ENCODE measurements at regions of chr12 and their contacts with region 1.

Region 1: DNA sequence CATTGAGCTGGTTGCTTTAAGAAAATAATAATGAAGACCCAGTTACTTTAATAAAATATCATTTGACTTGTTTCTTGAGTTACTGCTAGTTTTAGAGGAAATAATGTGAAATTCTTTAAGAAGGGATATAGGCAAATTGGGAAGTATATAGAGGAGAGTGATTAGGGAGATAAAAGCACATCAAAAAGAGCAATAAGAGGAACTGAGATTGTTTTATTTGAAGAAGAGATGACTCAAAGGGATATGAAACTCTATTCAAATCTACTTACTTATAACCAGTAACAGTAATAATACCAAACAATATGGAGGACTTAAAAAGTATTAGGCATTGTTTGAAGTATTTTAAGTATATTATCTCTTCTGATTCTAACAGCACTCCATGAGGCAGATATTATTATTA is 37.1 kb downstream of the LRRK2 start:
- DNase-seq: peak; percentile 75
- H3K4me3 ChIP-seq: peak overlapping the region; percentile 39
- H3K27ac ChIP-seq: peak overlapping the region; percentile 92
- H3K4me1 ChIP-seq: peaks cover 50% of the 10 kb centered on the region
- CTCF ChIP-seq: no peak

Region 2: GRCh38 chr12:39553471-39553870 is 708.5 kb before region 1 on chr12:
- CTCF ChIA-PET with region 1: no interaction called
- POLR2A ChIA-PET with region 1: no interaction called
- intact Hi-C with region 1: no loop called
- DNase-seq: no peak
- H3K4me3 ChIP-seq: no peak overlapping the region
- H3K27ac ChIP-seq: no peak overlapping the region
- H3K4me1 ChIP-seq: no peaks in the 10 kb centered on the region
- CTCF ChIP-seq: no peak

Region 3: DNA sequence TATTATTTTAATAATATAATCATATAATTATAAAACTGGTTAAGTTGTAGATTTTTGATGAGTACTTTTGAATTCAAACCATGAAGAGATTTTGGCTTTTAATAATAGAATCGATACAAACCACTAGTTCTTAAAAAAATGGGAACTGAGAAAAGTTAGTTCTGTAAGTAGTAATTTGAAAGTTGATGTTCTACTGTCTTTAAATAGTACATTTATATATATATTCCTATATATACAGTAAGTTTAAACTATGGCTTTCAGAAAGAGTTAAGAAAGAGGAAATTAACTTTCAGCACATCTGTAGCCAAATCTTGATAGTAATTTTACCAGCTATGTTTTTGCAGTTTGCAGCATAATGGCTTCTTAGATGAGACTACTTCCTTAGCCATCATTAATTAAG is 29.3 kb before region 1 on chr12:
- CTCF ChIA-PET with region 1: no interaction called
- POLR2A ChIA-PET with region 1: interaction called, 14 read pairs
- intact Hi-C with region 1: no loop called
- DNase-seq: peak; percentile 77
- H3K4me3 ChIP-seq: peak overlapping the region; percentile 46
- H3K27ac ChIP-seq: peak overlapping the region; percentile 92
- H3K4me1 ChIP-seq: peaks cover 65% of the 10 kb centered on the region
- CTCF ChIP-seq: no peak

Region 4: GRCh38 chr12:40248585-40249297 is 13.2 kb before region 1 on chr12:
- CTCF ChIA-PET with region 1: interaction called, 4 read pairs
- POLR2A ChIA-PET with region 1: interaction called, 23 read pairs
- intact Hi-C with region 1: no loop called
- DNase-seq: peak; percentile 56
- H3K4me3 ChIP-seq: peak overlapping the region; percentile 37
- H3K27ac ChIP-seq: peak overlapping the region; percentile 88
- H3K4me1 ChIP-seq: peaks cover 47% of the 10 kb centered on the region
- CTCF ChIP-seq: no peak

Region 5: DNA sequence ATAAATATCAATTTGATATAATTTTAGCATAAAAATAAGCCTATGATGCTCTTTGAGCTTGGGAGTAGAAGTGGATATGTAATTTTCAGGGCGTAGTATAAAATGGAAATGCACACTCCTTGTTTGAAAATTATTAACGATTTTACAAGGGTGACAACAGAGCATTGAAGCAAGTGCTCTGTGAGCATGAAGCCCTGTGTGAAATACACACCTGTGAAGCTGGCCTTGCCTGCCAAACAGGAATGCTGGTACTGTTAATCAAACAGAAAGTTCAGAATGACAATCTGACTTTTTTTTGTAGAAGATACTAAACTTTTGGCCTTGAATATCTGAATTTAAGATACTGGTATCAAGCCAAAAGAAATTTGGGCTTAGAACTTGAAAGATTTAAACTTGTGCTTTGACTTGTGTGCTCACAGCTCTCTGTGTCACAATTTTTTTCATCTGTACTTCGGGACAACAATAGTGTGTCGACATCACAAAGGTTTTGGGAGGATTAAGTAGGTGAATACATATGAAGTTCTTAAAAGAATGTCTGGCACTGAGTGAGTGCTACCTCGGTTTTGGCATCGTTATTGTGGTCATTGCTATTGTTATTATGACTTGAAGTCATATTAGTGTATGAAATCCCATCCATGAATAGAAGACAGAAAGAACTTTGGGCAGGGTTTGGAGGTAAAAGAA is 10.2 kb after region 1 on chr12:
- CTCF ChIA-PET with region 1: no interaction called
- POLR2A ChIA-PET with region 1: interaction called, 10 read pairs
- intact Hi-C with region 1: no loop called
- DNase-seq: no peak
- H3K4me3 ChIP-seq: no peak overlapping the region
- H3K27ac ChIP-seq: no peak overlapping the region
- H3K4me1 ChIP-seq: no peaks in the 10 kb centered on the region
- CTCF ChIP-seq: no peak

Region 6: DNA sequence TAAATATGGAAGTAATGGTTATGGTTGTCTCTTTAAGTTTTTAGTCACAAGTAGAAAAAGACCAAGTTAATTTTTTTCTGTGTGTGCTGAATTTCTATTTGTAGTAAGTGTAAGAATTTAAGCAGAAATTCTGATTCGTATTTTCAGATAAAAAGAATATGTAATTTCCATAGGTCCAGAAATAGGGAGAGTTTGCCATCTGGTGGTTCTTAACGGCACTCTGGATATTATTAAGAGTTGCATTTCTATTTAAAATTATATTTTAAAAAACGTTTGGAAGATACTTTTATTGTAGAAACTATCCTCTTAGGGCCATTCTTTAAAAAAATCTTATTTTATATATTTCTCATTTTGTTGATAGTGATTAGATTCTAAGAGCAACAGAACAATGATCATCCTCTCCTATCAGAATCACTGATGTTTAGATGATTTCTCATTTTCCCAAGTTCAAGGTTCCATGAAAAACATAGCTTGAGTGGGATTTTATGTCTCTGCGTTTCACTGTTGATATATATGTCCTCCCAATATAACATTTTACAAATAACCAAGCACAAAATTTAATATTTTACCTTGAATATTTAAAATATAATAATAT is 51.1 kb after region 1 on chr12:
- CTCF ChIA-PET with region 1: no interaction called
- POLR2A ChIA-PET with region 1: interaction called, 3 read pairs
- intact Hi-C with region 1: loop called (anchors 5 kb)
- DNase-seq: peak; percentile 54
- H3K4me3 ChIP-seq: no peak overlapping the region
- H3K27ac ChIP-seq: peak overlapping the region; percentile 35
- H3K4me1 ChIP-seq: peaks cover 36% of the 10 kb centered on the region
- CTCF ChIP-seq: peak; percentile 97